CD14-positive monocyte (primary cell): ENCODE measurements at regions of chr10 and their contacts with region 1.

Region 1: DNA sequence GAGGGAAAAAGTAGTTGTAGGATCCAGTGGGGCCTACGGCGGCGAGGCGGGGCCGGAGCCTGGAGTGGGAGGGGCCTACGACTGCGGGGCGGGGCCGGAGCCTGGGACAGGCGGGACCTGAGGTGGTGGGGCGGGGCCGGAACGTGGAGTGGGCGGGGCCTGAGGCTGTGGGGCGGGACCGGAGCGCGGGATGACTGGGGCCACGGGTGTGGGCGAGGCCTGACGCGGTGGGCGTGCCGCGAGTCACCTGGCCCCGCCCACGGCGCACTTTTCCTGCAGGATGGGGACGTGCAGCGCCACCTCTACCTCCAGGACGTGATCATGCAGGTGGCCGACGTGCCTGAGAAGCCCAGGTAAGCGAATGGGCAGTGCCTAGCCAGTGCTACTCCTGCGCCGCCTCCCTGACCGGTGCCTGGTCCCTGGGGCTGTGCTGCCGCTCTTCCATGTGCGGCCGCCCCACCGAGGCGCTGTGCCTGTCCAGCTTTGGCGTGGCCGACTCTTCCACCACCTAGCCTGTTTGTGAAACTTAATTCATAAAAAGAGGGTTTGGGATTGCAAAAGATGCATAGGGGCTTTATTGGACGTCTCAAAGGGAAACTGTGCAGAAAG is 501 bp downstream of the ZNF511 start:
- DNase-seq: peak; percentile 85 to 92 (median 88)
- H3K4me3 ChIP-seq: peak overlapping the region; percentile 77 to 87 (median 86)
- H3K4me3 Mint-ChIP-seq: peak overlapping the region; percentile 58 to 76
- H3K27ac ChIP-seq: peak overlapping the region; percentile 95 to 96
- H3K27ac Mint-ChIP-seq: peak overlapping the region; percentile 28 to 100 (median 90)
- H3K4me1 ChIP-seq: peaks cover 37 to 42% of the 10 kb centered on the region in 2 donors
- H3K4me1 Mint-ChIP-seq: peaks cover 35% of the 10 kb centered on the region
- H3K27me3 ChIP-seq: no peaks in the 10 kb centered on the region
- H3K27me3 Mint-ChIP-seq: peaks cover 0 to 5% (median 0%) of the 10 kb centered on the region in 3 donors
- CTCF ChIP-seq: no peak

Region 2: DNA sequence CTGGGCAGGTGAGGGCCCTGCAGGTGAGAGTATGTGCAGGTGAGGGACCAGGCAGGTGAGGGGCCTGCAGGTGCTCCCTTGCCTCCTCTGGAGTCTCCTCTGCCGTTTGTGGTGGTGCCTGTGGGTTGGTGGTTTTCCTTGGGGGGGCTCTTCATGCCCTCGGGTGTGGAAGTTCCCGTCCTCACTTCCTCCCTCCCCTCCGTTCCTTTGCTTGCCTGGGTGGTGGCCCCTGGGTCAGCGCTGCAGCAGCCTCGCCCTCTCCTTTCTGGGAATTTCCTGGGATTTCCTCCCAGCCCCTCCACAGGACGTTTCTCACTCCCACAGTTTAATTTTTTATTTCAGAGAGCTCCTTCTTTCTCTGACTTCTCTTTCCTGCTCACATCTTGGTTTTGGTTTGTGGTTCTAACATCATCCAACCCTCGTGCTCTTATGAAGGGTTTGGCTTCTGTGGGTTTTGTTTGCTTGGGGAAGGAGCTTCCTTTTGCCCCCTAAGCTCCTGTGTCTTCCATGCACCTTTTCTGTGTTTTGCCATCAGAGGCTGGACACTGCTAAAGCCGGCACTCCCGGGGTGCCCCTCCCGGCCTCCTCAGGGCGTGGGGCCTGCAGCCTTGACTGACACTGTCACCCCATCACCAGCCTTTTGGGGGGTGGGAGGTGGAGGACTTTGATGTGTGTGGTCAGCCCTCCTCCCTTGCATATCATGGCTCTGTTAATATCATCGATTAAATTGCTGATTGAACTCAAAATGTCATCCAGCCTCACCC is 250.7 kb before region 1 on chr10:
- intact Hi-C with region 1: no loop called
- DNase-seq: peak in 1 of 3 donors; percentile 15
- H3K4me3 ChIP-seq: no peak overlapping the region
- H3K4me3 Mint-ChIP-seq: no peak overlapping the region
- H3K27ac ChIP-seq: no peak overlapping the region
- H3K27ac Mint-ChIP-seq: peak overlapping the region in 3 of 7 donors; percentile 24 to 56 (median 32)
- H3K4me1 ChIP-seq: peaks cover 0 to 6% of the 10 kb centered on the region in 2 donors
- H3K4me1 Mint-ChIP-seq: peaks cover 3% of the 10 kb centered on the region
- H3K27me3 ChIP-seq: no peaks in the 10 kb centered on the region
- H3K27me3 Mint-ChIP-seq: peaks cover 7 to 15% (median 11%) of the 10 kb centered on the region in 3 donors
- CTCF ChIP-seq: no peak

Region 3: DNA sequence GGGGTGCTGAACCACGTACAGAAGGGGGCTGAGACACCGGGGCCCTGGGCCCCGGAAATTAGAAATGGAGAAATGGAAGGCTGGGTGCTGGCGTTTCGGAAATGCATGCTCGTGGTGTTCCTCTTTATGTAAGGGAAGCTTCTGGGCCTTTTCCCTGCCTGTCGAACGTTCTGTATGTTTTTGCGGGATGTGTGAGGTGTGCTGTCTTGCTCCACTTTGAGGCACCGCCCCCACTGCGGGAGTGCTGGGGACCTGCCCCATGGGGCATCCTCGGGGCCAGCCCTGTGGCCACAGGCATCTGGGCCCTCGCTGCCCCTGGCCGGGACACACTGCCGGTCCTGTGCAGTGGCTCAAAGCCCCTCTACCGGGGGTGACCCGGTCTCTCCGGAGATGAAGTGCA is 73.3 kb before region 1 on chr10:
- intact Hi-C with region 1: loop called in 1 of 2 experiments (anchors 2 kb)
- DNase-seq: peak; percentile 61 to 78 (median 75)
- H3K4me3 ChIP-seq: peak overlapping the region; percentile 40 to 76 (median 55)
- H3K4me3 Mint-ChIP-seq: peak overlapping the region; percentile 76 to 81
- H3K27ac ChIP-seq: peak overlapping the region; percentile 89 to 92
- H3K27ac Mint-ChIP-seq: peak overlapping the region; percentile 88 to 97 (median 94)
- H3K4me1 ChIP-seq: peaks cover 51 to 66% of the 10 kb centered on the region in 2 donors
- H3K4me1 Mint-ChIP-seq: peaks cover 28% of the 10 kb centered on the region
- H3K27me3 ChIP-seq: peaks cover 6 to 55% of the 10 kb centered on the region in 2 donors
- H3K27me3 Mint-ChIP-seq: peaks cover 44 to 78% (median 58%) of the 10 kb centered on the region in 3 donors
- CTCF ChIP-seq: no peak

Region 4: GRCh38 chr10:133278577-133279265 is 30.5 kb before region 1 on chr10:
- intact Hi-C with region 1: loop called in 1 of 2 experiments (anchors 2 kb)
- DNase-seq: peak; percentile 96 to 98 (median 97)
- H3K4me3 ChIP-seq: peak overlapping the region in 2 of 3 experiments; percentile 21 to 94
- H3K4me3 Mint-ChIP-seq: peak overlapping the region; percentile 83 to 91
- H3K27ac ChIP-seq: peak overlapping the region; percentile 96 to 99
- H3K27ac Mint-ChIP-seq: peak overlapping the region; percentile 99 to 100 (median 100)
- H3K4me1 ChIP-seq: peaks cover 73 to 78% of the 10 kb centered on the region in 2 donors
- H3K4me1 Mint-ChIP-seq: peaks cover 57% of the 10 kb centered on the region
- H3K27me3 ChIP-seq: no peaks in the 10 kb centered on the region
- H3K27me3 Mint-ChIP-seq: peaks cover 0 to 14% (median 2%) of the 10 kb centered on the region in 3 donors
- CTCF ChIP-seq: no peak

Region 5: DNA sequence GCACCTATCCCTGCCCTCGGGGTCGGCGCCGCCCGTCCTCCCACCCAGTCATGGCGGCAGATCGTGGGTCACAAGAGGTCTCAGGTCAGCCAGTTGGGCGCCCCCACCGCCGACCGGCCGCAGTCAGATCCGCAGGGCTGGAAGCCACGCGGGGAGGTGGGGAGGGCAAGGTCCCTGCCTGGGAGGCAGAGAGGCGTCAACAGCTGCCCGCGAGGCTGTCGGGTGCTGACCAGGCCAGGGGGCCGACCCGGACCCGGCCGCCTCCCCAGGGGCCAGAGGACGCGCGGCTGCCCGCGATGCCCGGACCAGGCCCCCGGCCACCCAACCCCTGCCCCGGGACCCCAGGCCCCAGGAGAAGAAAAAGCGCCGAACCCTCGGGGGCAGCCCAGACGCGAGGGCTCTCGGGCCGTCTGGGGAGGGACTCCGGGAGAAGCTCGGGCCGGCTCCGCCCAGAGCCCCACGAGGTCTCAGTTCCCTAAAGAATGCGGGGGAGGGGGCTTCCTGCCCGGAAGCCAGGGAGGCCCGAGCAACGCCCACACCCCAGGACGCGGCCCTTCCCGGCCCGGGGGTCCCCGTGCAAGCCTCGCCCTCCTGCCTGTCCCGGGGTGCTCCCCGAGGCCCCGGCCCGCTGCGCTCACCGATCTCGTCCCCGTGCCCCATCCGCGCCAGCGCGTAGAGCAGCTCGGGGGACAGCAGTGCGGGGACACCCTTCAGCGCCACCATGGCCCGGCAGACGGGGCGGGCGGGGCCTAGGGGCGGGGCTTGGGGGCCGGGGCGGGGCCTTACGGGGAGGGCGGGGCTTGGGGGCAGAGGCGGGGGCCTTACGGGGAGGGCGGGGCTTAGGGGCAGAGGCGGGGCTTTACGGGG is 48.3 kb after region 1 on chr10 and contains the start of gene FUOM:
- intact Hi-C with region 1: no loop called
- DNase-seq: peak; percentile 68 to 77 (median 70)
- H3K4me3 ChIP-seq: peak within 1 kb of the TSS; percentile 63 to 77 (median 69)
- H3K4me3 Mint-ChIP-seq: peak within 1 kb of the TSS; percentile 77 to 87
- H3K27ac ChIP-seq: peak within 1 kb of the TSS in 1 of 2 donors; percentile 62
- H3K27ac Mint-ChIP-seq: peak within 1 kb of the TSS in 3 of 7 donors; percentile 50 to 57 (median 50)
- H3K4me1 ChIP-seq: peaks cover 11 to 20% of the 10 kb centered on the region in 2 donors
- H3K4me1 Mint-ChIP-seq: peaks cover 12% of the 10 kb centered on the region
- H3K27me3 ChIP-seq: no peaks in the 10 kb centered on the region
- H3K27me3 Mint-ChIP-seq: peaks cover 0 to 6% (median 0%) of the 10 kb centered on the region in 3 donors
- CTCF ChIP-seq: no peak
- polyA plus RNA-seq, gene FUOM: 29.8 to 56.8 (median 39.0) TPM